ENCODE measurements at regions of chr7 and their contacts with region 1.

Region 1: DNA sequence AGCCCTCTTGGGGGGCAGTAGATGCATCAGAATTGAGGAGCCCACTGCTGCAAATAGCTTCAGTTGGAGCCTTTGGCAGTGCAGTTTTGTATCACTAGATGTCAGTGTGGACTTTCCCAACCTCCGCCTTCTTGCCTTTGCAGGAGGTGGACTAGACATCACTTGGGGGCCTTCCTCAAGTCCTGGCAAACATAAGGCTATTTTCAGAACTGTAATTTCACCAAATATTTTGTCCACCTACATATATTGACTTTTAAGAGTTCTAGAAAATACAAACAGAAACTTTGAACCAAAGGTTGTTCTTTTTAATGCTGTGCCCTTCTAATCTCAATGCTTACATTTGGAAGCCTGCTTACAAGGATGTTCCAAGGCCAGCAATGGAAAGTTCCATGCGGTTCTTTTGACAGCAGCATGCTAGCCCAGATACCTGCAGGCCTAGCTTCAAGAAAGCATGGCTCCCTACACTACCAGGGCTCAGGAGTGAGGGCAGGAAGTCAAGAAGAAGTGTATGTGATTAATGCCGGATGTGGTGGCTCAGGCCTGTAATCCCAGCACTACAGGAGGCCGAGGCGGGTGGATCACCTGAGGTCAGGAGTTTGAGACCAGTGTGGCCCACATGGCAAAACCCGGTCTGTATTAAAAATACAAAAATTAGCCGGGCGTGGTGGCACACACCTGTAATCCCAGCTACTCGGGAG is 8.0 kb upstream of the ZNRF2 start:
- DNase-seq: peak; percentile 43
- ATAC-seq: peak; percentile 96
- H3K4me3 ChIP-seq: no peak overlapping the region
- H3K27ac ChIP-seq: no peak overlapping the region
- H3K4me1 ChIP-seq: no peaks in the 10 kb centered on the region
- H3K27me3 ChIP-seq: no peaks in the 10 kb centered on the region
- CTCF ChIP-seq: peak; percentile 68 to 75 (median 75)
- POLR2A ChIP-seq: no peak
- RAD21 ChIP-seq: peak; percentile 89

Region 2: DNA sequence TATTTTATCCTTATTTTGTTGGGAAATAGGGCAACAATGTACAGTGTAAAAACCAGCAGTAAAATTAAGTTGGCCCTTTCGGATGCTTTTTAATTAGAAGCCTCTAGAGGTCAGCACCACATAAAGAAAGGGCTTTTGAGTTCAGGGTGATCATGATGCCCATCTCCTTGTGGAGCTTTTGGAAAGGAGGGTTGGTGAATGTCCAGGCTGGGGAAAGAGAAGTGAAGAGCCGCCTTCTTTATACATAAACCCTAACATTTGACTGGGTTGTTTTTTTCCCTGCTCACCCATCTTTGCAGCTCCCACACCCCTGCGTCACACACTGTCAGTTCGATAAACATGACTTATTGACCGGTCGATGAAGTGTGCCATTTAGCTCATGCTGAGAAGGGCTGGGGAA is 111.8 kb before region 1 on chr7:
- CTCF ChIA-PET with region 1: interaction called, 8 read pairs
- POLR2A ChIA-PET with region 1: no interaction called
- RAD21 ChIA-PET with region 1: interaction called in 1 of 2 experiments, 4 read pairs
- intact Hi-C with region 1: loop called (anchors 2 kb)
- DNase-seq: peak; percentile 33
- ATAC-seq: peak; percentile 68
- H3K4me3 ChIP-seq: no peak overlapping the region
- H3K27ac ChIP-seq: no peak overlapping the region
- H3K4me1 ChIP-seq: peaks cover 0 to 12% of the 10 kb centered on the region in 2 experiments; a peak in 2 of 4 replicates
- H3K27me3 ChIP-seq: no peaks in the 10 kb centered on the region
- CTCF ChIP-seq: peak; percentile 53 to 73 (median 64); a peak in 5 of 6 replicates
- POLR2A ChIP-seq: no peak
- RAD21 ChIP-seq: peak; percentile 87

Region 3: GRCh38 chr7:30379131-30379530 is 102.8 kb after region 1 on chr7:
- CTCF ChIA-PET with region 1: no interaction called
- POLR2A ChIA-PET with region 1: no interaction called
- RAD21 ChIA-PET with region 1: no interaction called
- intact Hi-C with region 1: no loop called
- DNase-seq: no peak
- ATAC-seq: no peak
- H3K4me3 ChIP-seq: no peak overlapping the region
- H3K27ac ChIP-seq: no peak overlapping the region
- H3K4me1 ChIP-seq: no peaks in the 10 kb centered on the region
- H3K27me3 ChIP-seq: no peaks in the 10 kb centered on the region
- CTCF ChIP-seq: no peak
- POLR2A ChIP-seq: no peak
- RAD21 ChIP-seq: no peak

Region 4: GRCh38 chr7:30548762-30549344 is 272.5 kb after region 1 on chr7:
- CTCF ChIA-PET with region 1: interaction called, 5 read pairs
- POLR2A ChIA-PET with region 1: no interaction called
- RAD21 ChIA-PET with region 1: no interaction called
- intact Hi-C with region 1: loop called (anchors 5 kb)
- DNase-seq: peak; percentile 52
- ATAC-seq: peak; percentile 77
- H3K4me3 ChIP-seq: no peak overlapping the region
- H3K27ac ChIP-seq: no peak overlapping the region
- H3K4me1 ChIP-seq: peaks cover 24 to 36% of the 10 kb centered on the region in 2 experiments
- H3K27me3 ChIP-seq: no peaks in the 10 kb centered on the region
- CTCF ChIP-seq: peak; percentile 63 to 86 (median 73); a peak in 5 of 6 replicates
- POLR2A ChIP-seq: no peak
- RAD21 ChIP-seq: peak; percentile 76

Region 5: GRCh38 chr7:30740424-30741181 is 464.3 kb after region 1 on chr7:
- CTCF ChIA-PET with region 1: interaction called, 4 read pairs
- POLR2A ChIA-PET with region 1: no interaction called
- RAD21 ChIA-PET with region 1: no interaction called
- intact Hi-C with region 1: loop called (anchors 5 kb)
- DNase-seq: peak; percentile 23
- ATAC-seq: peak; percentile 93
- H3K4me3 ChIP-seq: no peak overlapping the region
- H3K27ac ChIP-seq: no peak overlapping the region
- H3K4me1 ChIP-seq: no peaks in the 10 kb centered on the region
- H3K27me3 ChIP-seq: 0 out of 2 replicates have a peak, but pooled peaks cover 9% of the 10 kb centered on the region
- CTCF ChIP-seq: peak; percentile 87 to 99 (median 98)
- POLR2A ChIP-seq: no peak
- RAD21 ChIP-seq: peak; percentile 96

Measured in HCT116 (cell line).